ENCODE measurements at regions of chr10 and their contacts with region 1.

Region 1: GRCh38 chr10:127853868-127854768 is 38.6 kb downstream of the CLRN3 start:
- DNase-seq: peak; percentile 63
- ATAC-seq: peak; percentile 84
- H3K4me3 Mint-ChIP-seq: no peak overlapping the region
- H3K27ac Mint-ChIP-seq: no peak overlapping the region
- H3K4me1 Mint-ChIP-seq: no peaks in the 10 kb centered on the region
- H3K27me3 Mint-ChIP-seq: peaks cover 4% of the 10 kb centered on the region
- CTCF ChIP-seq: peak; percentile 83

Region 2: GRCh38 chr10:127563718-127564553 is 290.2 kb before region 1 on chr10:
- CTCF ChIA-PET with region 1: interaction called, 16 read pairs
- POLR2A ChIA-PET with region 1: no interaction called
- intact Hi-C with region 1: loop called (anchors 5 kb)
- DNase-seq: peak; percentile 55
- ATAC-seq: no peak
- H3K4me3 Mint-ChIP-seq: no peak overlapping the region
- H3K27ac Mint-ChIP-seq: no peak overlapping the region
- H3K4me1 Mint-ChIP-seq: no peaks in the 10 kb centered on the region
- H3K27me3 Mint-ChIP-seq: no peaks in the 10 kb centered on the region
- CTCF ChIP-seq: peak; percentile 73

Region 3: GRCh38 chr10:127715782-127716378 is 138.2 kb before region 1 on chr10:
- CTCF ChIA-PET with region 1: interaction called, 29 read pairs
- POLR2A ChIA-PET with region 1: no interaction called
- intact Hi-C with region 1: loop called (anchors 5 kb)
- DNase-seq: no peak
- ATAC-seq: no peak
- H3K4me3 Mint-ChIP-seq: no peak overlapping the region
- H3K27ac Mint-ChIP-seq: no peak overlapping the region
- H3K4me1 Mint-ChIP-seq: no peaks in the 10 kb centered on the region
- H3K27me3 Mint-ChIP-seq: no peaks in the 10 kb centered on the region
- CTCF ChIP-seq: peak; percentile 31

Region 4: DNA sequence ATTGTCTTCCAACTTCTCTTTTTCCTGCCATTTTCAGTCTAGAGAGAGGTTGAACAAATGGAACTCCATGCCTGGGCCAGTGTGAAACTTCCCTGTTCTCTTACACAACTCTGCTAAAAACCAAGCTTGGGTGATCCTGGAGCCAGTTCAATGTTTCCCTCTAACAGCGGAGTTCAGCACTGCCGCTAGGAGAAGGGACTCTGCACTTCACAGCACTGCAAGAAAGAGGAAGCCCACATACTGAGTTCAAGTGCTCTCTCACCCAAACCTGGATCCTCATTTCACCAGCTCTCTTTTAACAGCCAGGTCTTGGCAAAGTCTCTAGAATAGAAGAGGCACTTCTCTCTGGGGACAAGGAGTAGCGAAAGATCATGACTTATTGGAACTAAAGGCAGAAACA is 98.4 kb before region 1 on chr10:
- CTCF ChIA-PET with region 1: interaction called, 18 read pairs
- POLR2A ChIA-PET with region 1: no interaction called
- intact Hi-C with region 1: no loop called
- DNase-seq: no peak
- ATAC-seq: no peak
- H3K4me3 Mint-ChIP-seq: no peak overlapping the region
- H3K27ac Mint-ChIP-seq: no peak overlapping the region
- H3K4me1 Mint-ChIP-seq: no peaks in the 10 kb centered on the region
- H3K27me3 Mint-ChIP-seq: peaks cover 2% of the 10 kb centered on the region
- CTCF ChIP-seq: no peak

Region 5: GRCh38 chr10:127771418-127771817 is 82.7 kb before region 1 on chr10:
- CTCF ChIA-PET with region 1: interaction called, 10 read pairs
- POLR2A ChIA-PET with region 1: no interaction called
- intact Hi-C with region 1: no loop called
- DNase-seq: no peak
- ATAC-seq: no peak
- H3K4me3 Mint-ChIP-seq: no peak overlapping the region
- H3K27ac Mint-ChIP-seq: no peak overlapping the region
- H3K4me1 Mint-ChIP-seq: no peaks in the 10 kb centered on the region
- H3K27me3 Mint-ChIP-seq: no peaks in the 10 kb centered on the region
- CTCF ChIP-seq: no peak